Activated CD8-positive, alpha-beta memory T cell treated with anti-CD3 and anti-CD28 coated beads, Interleukin-2, amount 10 ng/mL, durations not matched to agents 7 days and 5 days (primary cell): ENCODE measurements at regions of chr19 and their contacts with region 1.

Region 1: DNA sequence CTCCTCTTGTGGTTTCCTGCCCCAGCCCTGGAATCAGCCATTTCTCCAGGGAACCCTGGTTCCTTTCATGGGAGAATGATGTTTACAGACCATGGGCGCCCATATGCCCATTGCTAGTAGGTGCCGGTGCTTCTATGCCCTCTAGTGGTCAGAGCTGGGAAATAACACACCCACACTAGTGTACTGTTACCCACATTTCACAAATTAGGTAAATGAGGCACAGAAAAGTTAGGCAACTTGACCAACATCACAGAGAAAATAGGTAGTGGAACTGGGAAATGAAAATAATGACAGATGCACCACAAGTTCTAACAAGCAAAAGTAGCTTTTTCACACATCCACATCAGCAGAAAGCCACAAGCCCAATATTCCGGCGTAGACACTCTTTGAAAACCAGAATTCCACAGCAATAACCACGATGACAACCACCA is 1.3 kb upstream of the CEACAM3 start:
- DNase-seq: peak; percentile 71
- ATAC-seq: peak; percentile 95
- H3K4me3 Mint-ChIP-seq: no peak overlapping the region
- H3K27ac Mint-ChIP-seq: no peak overlapping the region
- H3K4me1 Mint-ChIP-seq: no peaks in the 10 kb centered on the region
- H3K27me3 Mint-ChIP-seq: peaks cover 37% of the 10 kb centered on the region

Region 2: GRCh38 chr19:41657157-41657556 is 137.9 kb before region 1 on chr19:
- CTCF ChIA-PET with region 1: no interaction called
- DNase-seq: no peak
- ATAC-seq: no peak
- H3K4me3 Mint-ChIP-seq: no peak overlapping the region
- H3K27ac Mint-ChIP-seq: no peak overlapping the region
- H3K4me1 Mint-ChIP-seq: peaks cover 4% of the 10 kb centered on the region
- H3K27me3 Mint-ChIP-seq: peaks cover 79% of the 10 kb centered on the region

Region 3: GRCh38 chr19:41775360-41775695 is 19.7 kb before region 1 on chr19:
- CTCF ChIA-PET with region 1: interaction called, 71 read pairs
- DNase-seq: no peak
- ATAC-seq: no peak
- H3K4me3 Mint-ChIP-seq: no peak overlapping the region
- H3K27ac Mint-ChIP-seq: no peak overlapping the region
- H3K4me1 Mint-ChIP-seq: peaks cover 23% of the 10 kb centered on the region
- H3K27me3 Mint-ChIP-seq: peaks cover 79% of the 10 kb centered on the region

Region 4: DNA sequence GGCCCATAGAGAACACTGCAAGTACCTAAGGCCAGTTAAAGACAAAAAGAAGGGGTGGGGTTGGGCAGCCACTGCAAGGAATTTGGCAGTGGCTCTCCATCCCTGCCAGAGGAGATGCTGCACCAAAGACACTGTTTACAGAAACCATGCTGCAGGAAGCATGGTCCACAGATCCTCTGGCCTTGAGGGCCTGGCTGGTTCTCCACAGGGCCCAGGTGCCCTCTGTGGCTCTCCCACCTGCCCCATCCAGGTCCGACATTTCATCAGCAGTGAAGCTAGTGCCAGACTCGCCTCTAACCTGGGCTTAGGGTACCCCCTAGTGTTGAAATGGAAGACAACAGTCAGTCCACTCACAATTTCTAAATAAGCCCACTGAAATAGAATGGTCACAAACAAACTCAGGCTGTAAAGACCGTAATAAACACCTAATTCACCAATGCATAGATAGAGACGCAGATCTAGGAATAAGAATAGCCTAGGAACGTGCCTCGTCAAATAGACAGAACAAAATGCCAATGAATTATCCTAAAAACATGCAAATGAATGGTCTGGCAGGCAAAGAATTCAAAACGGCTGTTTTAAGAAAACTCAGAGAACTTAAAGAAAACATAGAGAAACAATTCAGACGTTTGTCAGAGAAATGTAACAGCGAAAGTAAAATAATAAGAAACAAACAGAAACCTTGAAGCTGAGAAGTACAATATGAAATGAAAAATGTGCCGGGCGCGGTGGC is 26.1 kb after region 1 on chr19:
- CTCF ChIA-PET with region 1: interaction called, 105 read pairs
- DNase-seq: peak; percentile 56
- ATAC-seq: peak; percentile 78
- H3K4me3 Mint-ChIP-seq: no peak overlapping the region
- H3K27ac Mint-ChIP-seq: no peak overlapping the region
- H3K4me1 Mint-ChIP-seq: peaks cover 3% of the 10 kb centered on the region
- H3K27me3 Mint-ChIP-seq: peaks cover 39% of the 10 kb centered on the region

Region 5: DNA sequence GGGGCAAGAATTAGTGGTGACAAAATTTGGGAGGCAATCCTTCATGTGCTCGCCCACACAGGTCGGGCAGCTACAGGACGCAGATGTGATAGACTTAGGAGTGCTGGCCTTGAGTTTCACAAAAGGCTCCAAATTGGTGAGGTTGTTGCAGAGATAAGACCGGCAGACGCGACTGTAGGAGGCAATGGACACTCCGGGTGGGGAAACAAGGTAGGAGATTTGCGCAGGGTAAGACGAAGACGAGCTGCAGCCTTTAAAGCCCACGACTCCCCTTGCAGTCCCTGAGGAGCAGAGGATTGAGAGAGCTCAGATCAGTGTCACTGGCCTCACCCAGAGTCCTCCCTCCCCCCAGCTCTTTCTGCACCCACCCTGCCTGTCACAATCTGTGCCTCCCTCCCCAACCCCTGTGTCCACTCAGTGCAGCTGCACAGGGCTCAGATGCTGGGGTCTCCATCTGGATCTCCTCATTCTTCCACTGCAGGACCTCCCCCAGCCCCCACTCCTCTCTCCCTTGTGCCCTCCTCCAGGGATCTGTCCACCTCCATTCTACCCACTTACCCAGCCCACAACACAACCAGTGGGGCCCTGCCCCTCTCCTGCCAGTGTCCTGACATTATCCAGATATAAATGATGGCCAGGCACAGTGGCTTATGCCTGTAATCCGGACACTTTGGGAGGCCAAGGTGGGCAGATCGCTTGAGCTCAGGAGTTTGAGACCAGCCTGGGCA is 43.1 kb after region 1 on chr19:
- CTCF ChIA-PET with region 1: interaction called, 33 read pairs
- DNase-seq: no peak
- ATAC-seq: no peak
- H3K4me3 Mint-ChIP-seq: no peak overlapping the region
- H3K27ac Mint-ChIP-seq: no peak overlapping the region
- H3K4me1 Mint-ChIP-seq: no peaks in the 10 kb centered on the region
- H3K27me3 Mint-ChIP-seq: peaks cover 37% of the 10 kb centered on the region

Region 6: DNA sequence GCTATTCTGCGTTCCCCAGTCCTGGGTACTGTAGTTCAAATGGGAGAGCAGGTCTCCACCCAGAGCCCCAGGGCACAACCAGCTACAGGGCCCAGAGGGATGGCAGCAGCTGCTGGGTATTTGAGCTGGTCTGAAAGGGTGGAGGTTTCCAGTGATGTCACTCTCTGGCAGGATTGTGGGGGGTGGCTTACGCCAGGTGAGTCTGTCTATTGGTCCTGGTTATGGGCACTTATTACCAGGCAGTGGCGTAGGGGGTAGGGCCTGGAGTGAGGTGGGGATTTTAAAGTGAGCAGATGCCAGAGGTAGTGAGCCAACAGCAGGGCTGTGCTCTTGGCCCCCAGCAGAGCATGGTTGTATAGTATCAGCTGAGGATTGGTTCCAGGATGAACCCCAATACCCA is 71.2 kb after region 1 on chr19:
- CTCF ChIA-PET with region 1: no interaction called
- DNase-seq: no peak
- ATAC-seq: no peak
- H3K4me3 Mint-ChIP-seq: no peak overlapping the region
- H3K27ac Mint-ChIP-seq: peak overlapping the region; percentile 79
- H3K4me1 Mint-ChIP-seq: peaks cover 86% of the 10 kb centered on the region
- H3K27me3 Mint-ChIP-seq: no peaks in the 10 kb centered on the region

Region 7: DNA sequence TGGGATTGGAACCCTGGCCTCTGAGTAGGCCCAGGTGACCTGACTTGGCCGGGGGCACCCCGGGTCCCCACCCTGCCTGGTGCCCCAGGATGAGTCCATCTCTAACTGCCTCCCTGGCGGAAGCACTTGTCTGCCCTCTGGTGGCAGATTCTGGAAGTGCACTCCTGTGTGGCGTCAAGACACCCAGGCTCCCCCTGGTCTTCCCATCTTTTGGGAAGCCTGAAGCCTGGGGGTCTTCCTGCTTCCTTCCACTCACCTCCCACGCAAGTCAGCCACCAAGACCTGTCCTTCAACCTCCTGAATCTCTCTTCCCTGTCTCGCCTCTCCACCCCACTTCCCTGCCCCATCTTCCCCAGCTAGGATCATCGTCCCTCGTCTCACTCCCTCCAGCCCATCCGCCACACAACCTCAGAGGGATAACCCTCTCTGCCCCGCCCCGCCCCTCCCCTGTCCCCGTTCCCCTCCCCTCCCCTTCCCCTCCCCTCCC is 156.7 kb after region 1 on chr19:
- CTCF ChIA-PET with region 1: interaction called, 12 read pairs
- DNase-seq: peak; percentile 92
- ATAC-seq: peak; percentile 89
- H3K4me3 Mint-ChIP-seq: no peak overlapping the region
- H3K27ac Mint-ChIP-seq: peak overlapping the region; percentile 21
- H3K4me1 Mint-ChIP-seq: peaks cover 21% of the 10 kb centered on the region
- H3K27me3 Mint-ChIP-seq: peaks cover 2% of the 10 kb centered on the region